H1 (cell line): ENCODE measurements at regions of chr16 and their contacts with region 1.

Region 1: DNA sequence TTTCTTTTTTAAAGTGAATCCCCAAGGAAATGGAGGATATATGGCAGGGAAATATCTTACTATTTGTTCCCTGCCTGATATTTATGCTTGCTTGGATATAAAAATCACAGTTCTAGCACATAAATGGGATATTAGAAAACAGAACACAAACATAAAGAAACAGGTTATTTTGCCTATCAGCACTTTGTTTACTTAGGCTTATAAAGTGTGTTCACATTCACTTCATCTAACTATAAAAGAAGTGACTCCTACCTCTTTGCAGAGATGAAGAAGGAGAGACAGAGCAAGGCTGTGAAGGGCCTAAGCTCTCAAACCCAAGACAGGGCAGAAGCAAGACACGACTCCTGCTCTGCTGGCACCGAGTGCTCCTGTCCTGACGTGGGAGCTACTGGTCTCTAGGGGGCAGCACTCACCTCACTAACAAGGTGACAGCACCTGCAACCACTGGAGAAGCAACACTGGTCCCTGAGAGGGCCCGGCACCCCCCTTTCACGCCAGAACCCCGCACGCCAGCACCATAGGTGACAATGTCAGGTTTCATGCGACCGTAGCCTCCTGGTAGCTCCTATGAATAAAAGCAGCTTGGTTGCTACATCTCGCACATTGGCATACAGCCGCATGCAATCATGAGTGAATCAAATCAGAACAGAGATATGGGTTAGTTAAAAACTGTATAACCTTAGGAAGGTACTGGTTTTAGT is 32.0 kb downstream of the MBTPS1 start:
- DNase-seq: peak; percentile 49 to 80
- H3K4me3 ChIP-seq: no peak overlapping the region
- H3K27ac ChIP-seq: no peak overlapping the region
- H3K4me1 ChIP-seq: no peaks in the 10 kb centered on the region
- H3K27me3 ChIP-seq: no peaks in the 10 kb centered on the region
- CTCF ChIP-seq: peak; percentile 88 to 97 (median 97)
- EP300 ChIP-seq: no peak
- POLR2A ChIP-seq: no peak
- RAD21 ChIP-seq: peak; percentile 72 to 79

Region 2: GRCh38 chr16:83878838-83879237 is 205.9 kb before region 1 on chr16:
- CTCF ChIA-PET with region 1: no interaction called
- POLR2A ChIA-PET with region 1: no interaction called
- DNase-seq: no peak
- H3K4me3 ChIP-seq: no peak overlapping the region
- H3K27ac ChIP-seq: no peak overlapping the region
- H3K4me1 ChIP-seq: peaks cover 0 to 3% (median 0%) of the 10 kb centered on the region in 4 experiments; a peak in 1 of 7 replicates
- H3K27me3 ChIP-seq: no peaks in the 10 kb centered on the region
- CTCF ChIP-seq: peak in 2 of 3 experiments; percentile 46 to 65; a peak in 2 of 4 replicates
- EP300 ChIP-seq: no peak
- POLR2A ChIP-seq: no peak
- RAD21 ChIP-seq: peak; percentile 89 to 90

Region 3: GRCh38 chr16:84072014-84072413 is 12.7 kb before region 1 on chr16:
- CTCF ChIA-PET with region 1: interaction called, 11 read pairs
- POLR2A ChIA-PET with region 1: no interaction called
- DNase-seq: no peak
- H3K4me3 ChIP-seq: no peak overlapping the region
- H3K27ac ChIP-seq: no peak overlapping the region
- H3K4me1 ChIP-seq: no peaks in the 10 kb centered on the region
- H3K27me3 ChIP-seq: no peaks in the 10 kb centered on the region
- CTCF ChIP-seq: no peak
- EP300 ChIP-seq: no peak
- POLR2A ChIP-seq: no peak
- RAD21 ChIP-seq: no peak

Region 4: GRCh38 chr16:84096115-84097012 is 11.6 kb after region 1 on chr16:
- CTCF ChIA-PET with region 1: interaction called, 15 read pairs
- POLR2A ChIA-PET with region 1: interaction called, 4 read pairs
- DNase-seq: no peak
- H3K4me3 ChIP-seq: no peak overlapping the region
- H3K27ac ChIP-seq: no peak overlapping the region
- H3K4me1 ChIP-seq: no peaks in the 10 kb centered on the region
- H3K27me3 ChIP-seq: no peaks in the 10 kb centered on the region
- CTCF ChIP-seq: no peak
- EP300 ChIP-seq: no peak
- POLR2A ChIP-seq: no peak
- RAD21 ChIP-seq: no peak

Region 5: DNA sequence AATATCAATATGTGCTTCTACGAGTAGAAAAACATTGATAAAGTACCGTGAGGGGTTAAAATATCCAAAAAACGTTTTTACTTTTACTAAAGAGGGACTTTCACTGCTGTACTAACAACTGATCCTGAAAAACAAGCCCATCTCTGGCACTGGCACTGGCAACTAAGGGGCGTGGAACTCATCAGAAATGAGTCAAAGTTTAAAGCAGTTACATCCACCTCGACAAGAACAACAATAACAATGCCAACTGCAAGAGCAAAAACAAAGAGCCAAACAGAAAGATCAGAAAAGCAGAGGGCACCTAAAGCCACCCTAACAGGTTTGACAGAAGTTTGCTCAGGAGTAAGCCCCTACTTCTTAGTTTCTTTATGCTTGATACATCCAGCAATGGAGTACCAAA is 19.0 kb after region 1 on chr16:
- CTCF ChIA-PET with region 1: interaction called, 27 read pairs
- POLR2A ChIA-PET with region 1: interaction called, 3 read pairs
- DNase-seq: no peak
- H3K4me3 ChIP-seq: no peak overlapping the region
- H3K27ac ChIP-seq: no peak overlapping the region
- H3K4me1 ChIP-seq: no peaks in the 10 kb centered on the region
- H3K27me3 ChIP-seq: peaks cover 0 to 1% (median 0%) of the 10 kb centered on the region in 4 experiments; a peak in 1 of 7 replicates
- CTCF ChIP-seq: no peak
- EP300 ChIP-seq: no peak
- POLR2A ChIP-seq: no peak
- RAD21 ChIP-seq: no peak

Region 6: GRCh38 chr16:84166796-84167695 is 82.3 kb after region 1 on chr16:
- CTCF ChIA-PET with region 1: interaction called, 15 read pairs
- POLR2A ChIA-PET with region 1: no interaction called
- DNase-seq: no peak
- H3K4me3 ChIP-seq: no peak overlapping the region
- H3K27ac ChIP-seq: no peak overlapping the region
- H3K4me1 ChIP-seq: no peaks in the 10 kb centered on the region
- H3K27me3 ChIP-seq: no peaks in the 10 kb centered on the region; a peak in 1 of 7 replicates
- CTCF ChIP-seq: no peak
- EP300 ChIP-seq: no peak
- POLR2A ChIP-seq: no peak
- RAD21 ChIP-seq: no peak